Activated CD4-positive, alpha-beta memory T cell treated with anti-CD3 and anti-CD28 coated beads, Interleukin-2, amount 10 ng/mL, durations not matched to agents 7 days and 5 days (primary cell): ENCODE measurements at regions of chr1 and their contacts with region 1.

Region 1: DNA sequence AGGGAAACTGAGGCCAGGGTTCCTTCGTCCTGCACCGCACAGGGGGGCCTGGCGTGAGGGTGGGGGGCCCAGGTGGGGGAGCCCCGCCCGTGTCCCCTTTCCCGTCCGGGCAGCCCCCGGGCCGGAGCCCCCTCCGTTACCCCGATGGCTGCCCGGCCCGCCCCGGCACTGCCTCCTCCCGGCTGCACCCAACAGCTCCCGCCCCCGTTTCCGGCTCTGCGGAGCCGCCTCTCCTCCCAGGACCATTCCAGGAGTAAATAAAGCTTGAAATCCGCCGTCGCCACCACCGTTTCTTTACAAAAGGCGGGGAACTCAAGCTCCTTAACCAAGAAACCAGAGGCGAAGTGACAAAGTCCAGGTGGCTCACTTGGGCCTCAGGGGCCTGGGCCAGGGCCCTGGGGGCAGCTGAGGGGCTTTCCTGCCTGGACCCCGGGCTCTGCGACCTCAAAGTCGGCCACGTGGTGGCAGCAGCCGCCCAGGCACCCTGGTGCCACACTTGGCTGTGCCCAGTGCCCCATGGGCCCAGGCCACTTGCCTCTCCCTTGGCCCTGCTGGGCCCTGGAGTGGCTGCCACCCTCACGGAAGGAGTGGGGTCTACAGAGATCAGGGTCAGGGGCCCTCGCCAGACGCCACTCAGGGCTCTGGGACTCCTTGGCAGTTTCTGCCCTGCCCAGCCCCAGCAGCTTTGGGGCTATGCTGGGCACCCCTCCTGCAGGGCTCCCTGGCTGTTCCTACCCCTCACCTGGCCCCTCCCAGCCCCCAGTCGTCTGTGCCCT is 514 bp upstream of the FAAP20 start:
- DNase-seq: peak; percentile 91
- H3K4me3 Mint-ChIP-seq: peak overlapping the region; percentile 78
- H3K27ac Mint-ChIP-seq: peak overlapping the region; percentile 92
- H3K4me1 Mint-ChIP-seq: peaks cover 49% of the 10 kb centered on the region
- H3K27me3 Mint-ChIP-seq: no peaks in the 10 kb centered on the region

Region 2: DNA sequence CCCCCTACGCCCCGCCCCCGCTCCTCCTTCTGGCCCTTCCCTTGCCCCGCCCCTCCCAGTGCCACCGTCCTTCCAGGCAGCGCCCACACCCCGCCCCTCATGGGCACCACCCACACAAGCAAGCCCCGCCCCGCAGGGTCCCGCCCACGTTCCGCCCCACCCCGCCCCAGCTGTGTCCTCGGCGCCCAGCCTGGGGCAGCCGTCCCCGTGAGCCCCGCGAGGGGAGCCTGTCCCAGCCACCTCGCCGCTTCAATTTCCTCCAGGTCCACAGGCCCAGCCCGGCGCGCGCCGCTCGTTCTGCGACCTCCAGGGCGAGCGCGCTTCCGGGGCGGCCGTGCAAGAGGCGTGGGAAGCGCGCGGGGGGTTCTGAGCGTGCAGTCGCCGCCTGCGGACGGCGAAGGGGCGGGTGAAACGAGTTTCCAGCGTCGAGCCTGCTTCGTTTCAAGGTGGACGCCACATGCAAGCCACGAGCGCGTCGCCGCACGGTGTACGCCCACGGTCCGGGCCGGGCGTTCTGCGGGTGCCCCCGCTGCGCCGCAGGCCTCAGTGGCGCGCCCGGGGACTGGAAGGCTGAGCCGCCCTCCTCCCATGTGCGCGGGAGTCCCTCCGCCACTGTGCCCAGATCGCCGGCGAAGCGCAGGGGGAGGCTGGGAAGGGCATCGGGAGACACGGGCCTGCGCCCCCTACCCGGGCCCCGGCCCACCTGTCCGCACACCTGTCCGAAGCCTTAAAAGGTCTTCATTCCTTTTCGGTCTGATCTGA is 10.3 kb after region 1 on chr1:
- CTCF ChIA-PET with region 1: interaction called, 12 read pairs
- POLR2A ChIA-PET with region 1: interaction called, 11 read pairs
- DNase-seq: peak; percentile 96
- H3K4me3 Mint-ChIP-seq: peak overlapping the region; percentile 63
- H3K27ac Mint-ChIP-seq: no peak overlapping the region
- H3K4me1 Mint-ChIP-seq: peaks cover 10% of the 10 kb centered on the region
- H3K27me3 Mint-ChIP-seq: peaks cover 4% of the 10 kb centered on the region

Region 3: DNA sequence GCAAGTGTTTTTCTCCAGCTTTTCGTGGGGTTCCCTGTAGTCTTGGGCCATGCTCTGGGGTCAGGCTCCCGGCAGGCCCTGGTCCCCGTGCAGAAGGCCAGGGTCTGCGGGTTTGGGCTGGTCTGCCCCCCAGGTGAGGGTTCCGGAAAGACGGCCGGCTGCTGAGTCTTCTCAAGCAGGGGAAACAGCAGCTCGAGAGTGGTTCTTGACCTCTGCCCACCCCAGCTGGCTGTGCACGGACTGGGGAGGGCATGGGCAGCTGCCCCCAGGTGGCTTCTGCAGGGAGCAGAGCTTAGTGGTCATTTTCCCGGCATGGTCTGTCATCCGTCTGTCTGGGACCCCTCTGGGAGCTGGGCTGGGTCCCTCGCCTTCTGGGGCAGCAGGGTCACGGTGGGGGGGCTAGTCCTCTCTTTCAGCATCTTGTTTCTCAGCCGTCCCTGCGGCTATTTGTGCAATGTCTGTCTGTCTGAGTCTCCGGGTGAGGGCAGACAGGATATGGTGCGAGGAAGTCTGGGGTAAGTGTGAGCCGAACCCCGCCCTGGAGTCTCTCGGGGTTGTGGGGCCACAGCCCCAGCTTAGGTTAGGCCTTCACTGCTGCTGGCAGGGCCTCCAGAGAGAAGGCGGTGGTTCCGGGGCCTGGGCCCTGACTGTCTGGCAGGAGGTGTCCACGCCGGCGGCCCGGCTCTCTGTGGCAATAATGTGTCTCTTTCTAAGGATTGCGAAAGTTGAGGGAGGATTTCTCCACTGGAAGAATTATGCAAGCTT is 39.1 kb after region 1 on chr1:
- CTCF ChIA-PET with region 1: interaction called, 16 read pairs
- POLR2A ChIA-PET with region 1: interaction called, 50 read pairs
- DNase-seq: peak; percentile 86
- H3K4me3 Mint-ChIP-seq: peak overlapping the region; percentile 98
- H3K27ac Mint-ChIP-seq: peak overlapping the region; percentile 90
- H3K4me1 Mint-ChIP-seq: peaks cover 67% of the 10 kb centered on the region
- H3K27me3 Mint-ChIP-seq: no peaks in the 10 kb centered on the region

Region 4: GRCh38 chr1:2290595-2291510 is 95.8 kb after region 1 on chr1:
- CTCF ChIA-PET with region 1: interaction called, 14 read pairs
- POLR2A ChIA-PET with region 1: interaction called, 11 read pairs
- DNase-seq: peak; percentile 92
- H3K4me3 Mint-ChIP-seq: peak overlapping the region; percentile 74
- H3K27ac Mint-ChIP-seq: peak overlapping the region; percentile 97
- H3K4me1 Mint-ChIP-seq: peaks cover 85% of the 10 kb centered on the region
- H3K27me3 Mint-ChIP-seq: no peaks in the 10 kb centered on the region

Region 5: DNA sequence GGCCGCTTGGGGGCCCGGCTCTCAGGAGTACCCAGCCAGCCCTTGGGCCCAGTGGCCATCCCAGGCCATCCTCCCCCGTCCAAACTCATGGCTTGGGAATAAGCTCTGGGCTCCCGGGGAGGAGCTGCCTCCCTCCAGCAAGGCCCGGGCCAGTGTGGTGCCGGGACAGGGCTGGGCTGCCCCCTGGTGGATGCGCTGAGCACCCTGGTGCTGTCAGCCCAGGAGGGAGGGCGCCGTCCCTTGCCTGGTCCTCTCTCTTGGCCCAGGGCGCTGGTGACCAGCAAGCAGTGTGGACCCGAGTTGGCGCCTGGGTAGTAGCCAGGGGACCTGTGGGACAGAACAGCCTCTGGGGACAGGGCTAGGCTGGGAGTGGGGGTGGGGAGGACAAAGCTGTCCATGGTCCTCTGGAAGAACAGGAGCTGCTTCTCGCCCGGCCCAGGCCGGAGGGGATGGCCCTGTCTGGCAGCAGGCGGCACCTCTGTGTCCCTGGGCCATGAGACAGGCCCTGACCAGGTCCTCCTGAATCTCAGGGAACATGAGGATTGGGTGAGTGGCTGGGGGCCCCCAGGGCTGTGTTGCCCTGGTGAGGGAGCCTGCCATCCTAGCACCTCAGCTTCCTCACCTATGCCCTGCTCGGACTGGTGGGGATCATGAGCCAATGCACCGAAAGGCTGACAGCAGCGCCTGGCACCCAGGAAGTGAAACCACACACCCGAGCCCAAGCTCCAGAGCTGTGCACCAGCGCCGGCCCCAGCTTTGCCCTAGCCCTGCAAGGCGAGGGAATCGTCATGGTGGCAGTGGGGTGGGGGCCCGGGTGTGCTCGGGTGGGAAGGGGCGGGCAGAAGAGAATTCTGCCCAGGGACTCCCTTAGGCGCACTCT is 186.9 kb after region 1 on chr1:
- CTCF ChIA-PET with region 1: interaction called, 175 read pairs
- POLR2A ChIA-PET with region 1: interaction called, 48 read pairs
- DNase-seq: peak; percentile 81
- H3K4me3 Mint-ChIP-seq: no peak overlapping the region
- H3K27ac Mint-ChIP-seq: no peak overlapping the region
- H3K4me1 Mint-ChIP-seq: peaks cover 8% of the 10 kb centered on the region
- H3K27me3 Mint-ChIP-seq: no peaks in the 10 kb centered on the region

Region 6: DNA sequence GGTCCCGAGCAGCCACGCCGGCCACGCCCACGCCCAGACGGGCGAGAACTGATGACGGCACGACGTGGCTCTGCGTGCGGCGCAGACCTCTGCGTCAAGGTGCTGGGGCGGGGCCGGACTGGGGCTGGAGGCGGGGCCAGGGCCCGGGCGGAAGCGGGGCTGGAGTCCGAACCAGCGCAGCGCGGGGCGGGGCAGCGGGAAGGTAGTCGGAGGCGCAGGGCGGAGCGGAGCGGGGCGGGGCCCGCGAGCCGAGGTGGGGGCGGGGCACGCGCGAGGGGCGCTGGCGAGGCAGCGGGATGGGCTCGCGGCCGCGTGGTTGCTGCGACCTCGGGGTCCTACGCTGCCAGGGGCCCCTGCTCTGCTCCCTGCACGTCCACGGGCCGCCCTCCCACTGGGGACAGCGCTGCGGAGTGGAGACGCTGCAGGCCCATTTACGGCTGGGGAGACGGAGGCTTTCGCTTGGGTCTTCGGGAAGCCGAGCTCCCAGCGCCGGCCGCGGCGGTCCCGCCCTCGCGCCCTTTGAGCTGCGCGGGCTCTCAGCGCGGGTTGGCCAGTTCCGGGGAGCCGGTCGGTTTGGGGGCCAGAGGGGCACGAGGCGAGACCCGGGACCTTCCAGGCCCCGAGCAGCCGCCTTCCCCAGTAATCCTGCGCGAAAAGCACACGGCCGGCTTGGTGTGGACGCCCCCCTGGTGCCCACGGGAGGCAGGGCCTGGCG is 217.6 kb after region 1 on chr1 and contains the start of gene PEX10:
- CTCF ChIA-PET with region 1: interaction called, 13 read pairs
- POLR2A ChIA-PET with region 1: interaction called, 5 read pairs
- DNase-seq: peak; percentile 99
- H3K4me3 Mint-ChIP-seq: peak within 1 kb of the TSS; percentile 85
- H3K27ac Mint-ChIP-seq: peak within 1 kb of the TSS; percentile 94
- H3K4me1 Mint-ChIP-seq: peaks cover 40% of the 10 kb centered on the region
- H3K27me3 Mint-ChIP-seq: no peaks in the 10 kb centered on the region
- total RNA-seq, gene PEX10: 6.8 to 9.5 TPM